PC-3 (cell line): ENCODE measurements at regions of chr7 and their contacts with region 1.

Region 1: GRCh38 chr7:101856473-101857357 is 39.3 kb downstream of the CUX1 start:
- DNase-seq: peak; percentile 94
- ATAC-seq: peak; percentile 96
- H3K4me3 ChIP-seq: peak overlapping the region; percentile 56
- H3K27ac ChIP-seq: peak overlapping the region; percentile 90
- H3K4me1 ChIP-seq: peaks cover 23% of the 10 kb centered on the region
- H3K27me3 ChIP-seq: no peaks in the 10 kb centered on the region
- CTCF ChIP-seq: peak; percentile 62

Region 2: GRCh38 chr7:101870351-101871062 is 13.8 kb after region 1 on chr7:
- CTCF ChIA-PET with region 1: interaction called, 13 read pairs
- POLR2A ChIA-PET with region 1: interaction called, 5 read pairs
- intact Hi-C with region 1: no loop called
- DNase-seq: peak; percentile 89
- ATAC-seq: peak; percentile 88
- H3K4me3 ChIP-seq: peak overlapping the region; percentile 36; the same call in 1 of the 2 replicates
- H3K27ac ChIP-seq: peak overlapping the region; percentile 97
- H3K4me1 ChIP-seq: peaks cover 24% of the 10 kb centered on the region
- H3K27me3 ChIP-seq: no peaks in the 10 kb centered on the region
- CTCF ChIP-seq: peak; percentile 65